A549 (cell line): ENCODE measurements at regions of chr3 and their contacts with region 1.

Region 1: DNA sequence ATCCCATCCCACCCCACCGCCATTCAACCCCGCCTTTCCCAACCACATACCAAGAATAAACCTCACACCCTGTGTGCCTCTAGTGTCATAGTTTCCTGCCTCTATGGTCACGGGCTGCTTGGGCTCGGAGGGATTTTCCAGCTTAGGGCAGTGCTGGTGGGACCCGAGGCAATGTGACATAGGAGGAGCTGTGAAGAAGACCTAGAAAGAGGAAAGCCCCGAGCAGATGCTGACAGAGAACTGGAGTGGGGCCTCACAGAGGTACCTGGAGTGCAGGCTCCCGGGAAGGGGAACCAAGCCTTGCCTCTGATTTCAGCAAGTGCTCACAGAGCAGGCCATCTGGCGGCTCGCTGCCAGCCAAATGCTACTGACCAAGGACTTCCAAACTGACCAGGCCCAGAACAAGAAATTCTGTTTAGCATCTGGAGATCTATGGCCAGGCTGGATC is 27.5 kb downstream of the BHLHE40 start:
- DNase-seq: no peak
- ATAC-seq: no peak
- H3K4me3 ChIP-seq: no peak overlapping the region
- H3K27ac ChIP-seq: peak overlapping the region; percentile 42 to 59; a peak in 5 of 6 replicates
- H3K4me1 ChIP-seq: peaks cover 8% of the 10 kb centered on the region; the same call in 2 of the 3 replicates
- CTCF ChIP-seq: no peak
- EP300 ChIP-seq: no peak
- POLR2A ChIP-seq: no peak
- RAD21 ChIP-seq: no peak

Region 2: DNA sequence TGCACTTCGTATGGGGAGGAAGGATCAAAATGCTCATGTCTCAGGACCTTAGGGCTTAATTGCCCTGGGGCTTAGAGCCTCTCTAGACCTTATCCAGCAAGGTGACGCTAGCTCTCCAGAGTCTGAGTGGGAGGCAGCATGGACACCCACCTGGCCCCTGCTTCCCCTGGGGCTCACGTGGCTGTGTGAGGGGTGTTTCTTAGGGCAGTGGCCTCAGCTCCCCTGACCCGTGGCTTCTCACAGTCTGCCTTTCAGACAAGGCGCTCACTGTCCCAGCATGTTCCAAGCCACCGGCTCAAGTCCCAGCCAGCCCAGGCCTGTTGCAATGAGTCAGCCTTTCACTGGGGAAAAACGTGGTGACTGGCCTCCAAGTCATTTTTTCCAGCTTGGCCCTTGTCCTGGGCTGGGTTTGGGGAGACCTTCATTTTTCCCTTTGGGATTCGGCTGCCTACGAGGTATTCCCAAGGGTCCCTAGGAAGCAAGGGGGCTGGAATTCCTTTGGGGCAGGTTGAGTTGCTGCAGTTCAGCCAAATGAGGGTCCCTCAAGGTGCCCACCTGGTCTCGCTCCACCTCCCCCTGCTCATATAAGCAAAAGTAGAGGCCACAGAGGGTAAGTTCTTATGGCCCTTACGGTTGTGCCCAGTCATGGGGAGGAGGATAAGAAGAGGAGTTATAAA is 11.8 kb before region 1 on chr3:
- CTCF ChIA-PET with region 1: interaction called, 18 read pairs
- POLR2A ChIA-PET with region 1: no interaction called
- DNase-seq: peak in 1 of 2 experiments; percentile 84
- ATAC-seq: peak; percentile 70 to 72
- H3K4me3 ChIP-seq: no peak overlapping the region
- H3K27ac ChIP-seq: peak overlapping the region; percentile 83 to 91
- H3K4me1 ChIP-seq: peaks cover 55% of the 10 kb centered on the region
- CTCF ChIP-seq: no peak
- EP300 ChIP-seq: no peak
- POLR2A ChIP-seq: no peak
- RAD21 ChIP-seq: no peak

Region 3: DNA sequence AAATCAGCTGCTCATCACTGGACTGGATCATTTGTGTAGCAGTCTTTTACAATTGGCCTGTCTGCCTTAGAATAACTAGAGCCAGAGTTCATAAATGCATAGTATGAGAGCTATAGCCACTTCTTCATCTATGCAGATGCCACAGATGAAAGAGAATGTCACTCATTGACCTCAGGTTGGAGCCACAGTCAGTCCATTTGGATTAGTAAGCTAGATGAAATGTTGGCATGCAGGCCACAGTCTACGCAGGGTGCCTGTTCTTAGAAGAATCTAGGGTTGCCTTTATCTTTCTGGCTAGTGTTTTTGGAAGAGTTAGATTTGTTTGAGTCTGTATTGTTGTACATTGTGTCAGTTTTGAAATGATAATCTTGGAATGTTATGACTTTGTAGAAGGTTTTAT is 155.3 kb after region 1 on chr3:
- CTCF ChIA-PET with region 1: no interaction called
- POLR2A ChIA-PET with region 1: no interaction called
- DNase-seq: no peak
- ATAC-seq: peak; percentile 77 to 79
- H3K4me3 ChIP-seq: no peak overlapping the region
- H3K27ac ChIP-seq: no peak overlapping the region
- H3K4me1 ChIP-seq: peaks cover 31% of the 10 kb centered on the region
- CTCF ChIP-seq: no peak
- EP300 ChIP-seq: no peak
- POLR2A ChIP-seq: no peak
- RAD21 ChIP-seq: no peak